CD8-positive, alpha-beta memory T cell (primary cell): ENCODE measurements at regions of chr11 and their contacts with region 1.

Region 1: DNA sequence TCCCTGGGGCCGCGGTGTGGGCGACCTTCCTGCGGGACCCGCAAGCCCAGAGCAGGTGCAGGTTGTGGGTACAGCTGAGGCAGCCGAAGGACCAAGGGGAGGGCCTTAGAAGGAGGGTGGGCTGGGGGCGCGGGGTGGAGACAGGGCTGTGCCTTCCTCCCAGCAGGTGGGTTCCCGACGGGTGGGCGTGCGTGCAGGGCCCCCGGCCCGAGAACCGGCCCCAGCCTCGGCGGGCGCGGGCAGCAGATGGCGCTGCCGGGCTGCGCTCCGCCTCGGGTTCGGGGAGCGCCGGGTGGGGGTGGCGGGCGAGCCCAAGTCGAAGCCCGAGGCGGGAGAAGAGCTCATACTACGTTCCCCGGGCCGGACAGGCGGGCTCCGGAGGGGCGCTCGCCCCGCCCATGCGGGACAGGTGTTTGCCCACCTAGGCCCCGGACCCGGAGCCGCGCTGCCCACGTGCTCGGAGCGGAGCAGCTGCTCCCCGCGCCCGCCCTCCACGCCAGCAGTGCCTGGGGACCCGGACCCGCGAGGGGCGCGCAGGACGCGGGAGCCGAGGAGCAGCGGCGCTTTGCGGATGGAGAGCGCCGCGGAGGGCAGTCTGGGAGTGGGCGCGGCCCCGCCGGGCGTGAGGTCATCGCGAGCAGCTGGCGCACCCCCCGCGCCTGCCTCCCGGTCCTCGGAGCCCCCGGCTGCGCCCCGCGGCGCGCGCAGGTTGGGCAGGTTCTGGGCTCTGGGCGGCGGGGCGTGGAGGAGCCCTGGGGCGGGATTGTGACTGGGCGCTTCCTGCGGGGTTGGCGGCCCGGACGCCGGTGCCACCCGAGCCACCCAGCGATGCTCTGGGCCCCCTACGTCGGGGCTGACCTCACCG is 25.3 kb downstream of the DUSP8 start:
- DNase-seq: peak; percentile 31 to 70 (median 47)
- H3K4me3 ChIP-seq: no peak overlapping the region
- H3K4me3 Mint-ChIP-seq: no peak overlapping the region
- H3K27ac ChIP-seq: no peak overlapping the region
- H3K27ac Mint-ChIP-seq: no peak overlapping the region
- H3K4me1 ChIP-seq: peaks cover 14% of the 10 kb centered on the region
- H3K4me1 Mint-ChIP-seq: peaks cover 0 to 11% (median 2%) of the 10 kb centered on the region in 3 donors
- H3K27me3 ChIP-seq: peaks cover 24% of the 10 kb centered on the region
- H3K27me3 Mint-ChIP-seq: peaks cover 19 to 37% of the 10 kb centered on the region in 2 donors

Region 2: GRCh38 chr11:1271002-1271401 is 275.8 kb before region 1 on chr11:
- CTCF ChIA-PET with region 1: no interaction called
- POLR2A ChIA-PET with region 1: no interaction called
- DNase-seq: no peak
- H3K4me3 ChIP-seq: no peak overlapping the region
- H3K4me3 Mint-ChIP-seq: no peak overlapping the region
- H3K27ac ChIP-seq: no peak overlapping the region
- H3K27ac Mint-ChIP-seq: peak overlapping the region in 1 of 8 donors; percentile 90
- H3K4me1 ChIP-seq: no peaks in the 10 kb centered on the region
- H3K4me1 Mint-ChIP-seq: peaks cover 0 to 5% (median 0%) of the 10 kb centered on the region in 3 donors
- H3K27me3 ChIP-seq: no peaks in the 10 kb centered on the region
- H3K27me3 Mint-ChIP-seq: no peaks in the 10 kb centered on the region

Region 3: GRCh38 chr11:1482581-1483444 is 64.0 kb before region 1 on chr11:
- CTCF ChIA-PET with region 1: no interaction called
- POLR2A ChIA-PET with region 1: no interaction called
- DNase-seq: peak in 1 of 5 donors; percentile 42
- H3K4me3 ChIP-seq: no peak overlapping the region
- H3K4me3 Mint-ChIP-seq: no peak overlapping the region
- H3K27ac ChIP-seq: no peak overlapping the region
- H3K27ac Mint-ChIP-seq: peak overlapping the region in 1 of 8 donors; percentile 89
- H3K4me1 ChIP-seq: peaks cover 14% of the 10 kb centered on the region
- H3K4me1 Mint-ChIP-seq: peaks cover 14 to 35% (median 20%) of the 10 kb centered on the region in 3 donors
- H3K27me3 ChIP-seq: no peaks in the 10 kb centered on the region
- H3K27me3 Mint-ChIP-seq: no peaks in the 10 kb centered on the region

Region 4: GRCh38 chr11:1632053-1632714 is 85.4 kb after region 1 on chr11:
- CTCF ChIA-PET with region 1: interaction called, 10 read pairs
- POLR2A ChIA-PET with region 1: no interaction called
- DNase-seq: no peak
- H3K4me3 ChIP-seq: no peak overlapping the region
- H3K4me3 Mint-ChIP-seq: no peak overlapping the region
- H3K27ac ChIP-seq: no peak overlapping the region
- H3K27ac Mint-ChIP-seq: peak overlapping the region in 1 of 8 donors; percentile 9
- H3K4me1 ChIP-seq: peaks cover 7% of the 10 kb centered on the region
- H3K4me1 Mint-ChIP-seq: peaks cover 0 to 13% (median 6%) of the 10 kb centered on the region in 3 donors
- H3K27me3 ChIP-seq: peaks cover 17% of the 10 kb centered on the region
- H3K27me3 Mint-ChIP-seq: peaks cover 29 to 58% of the 10 kb centered on the region in 2 donors